ENCODE measurements at regions of chr7 and their contacts with region 1.

Region 1: DNA sequence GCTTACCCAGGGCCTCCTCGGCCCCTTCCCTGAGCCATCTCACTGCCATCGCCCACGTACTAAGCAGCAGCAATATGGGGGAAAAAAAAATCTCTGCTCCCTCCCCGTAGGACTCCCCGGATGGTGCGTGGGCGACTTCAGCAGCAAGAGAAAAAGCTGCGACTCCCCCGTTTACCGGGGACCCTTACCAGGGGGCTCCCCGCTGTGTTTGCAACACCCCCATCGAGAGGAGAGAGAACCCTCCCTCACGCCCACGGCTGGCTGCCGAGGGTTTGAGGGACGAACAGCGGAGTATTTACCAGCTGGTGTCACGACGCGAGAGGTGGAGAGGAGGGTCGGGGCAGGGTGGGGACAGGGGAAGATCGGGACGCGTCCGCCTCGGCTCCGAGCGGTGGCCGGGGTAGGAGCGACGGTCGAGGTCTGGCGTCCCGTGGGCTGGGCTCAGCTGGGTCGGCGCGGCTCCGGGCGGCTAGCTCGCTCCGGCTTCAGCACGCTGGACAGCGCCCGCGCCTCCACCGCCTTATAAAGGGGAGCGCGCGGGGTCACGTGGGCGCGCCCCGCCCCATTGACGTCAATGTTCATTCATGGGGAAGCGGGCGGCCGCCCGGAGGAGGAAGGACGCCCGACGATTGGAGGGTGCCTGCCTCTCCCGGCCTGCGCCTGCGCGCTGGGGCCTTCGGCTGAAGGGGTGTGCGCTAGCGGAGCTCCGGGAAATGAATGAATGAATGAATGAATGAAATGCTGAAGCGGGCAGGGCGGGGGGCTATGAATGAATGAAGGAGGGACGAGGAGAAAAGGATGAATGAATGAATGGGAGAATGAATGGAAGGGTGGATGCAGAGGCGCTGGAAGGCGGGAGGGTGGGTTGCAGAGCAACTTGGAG is at the start of gene VGF:
- DNase-seq: peak; percentile 96
- ATAC-seq: peak; percentile 75
- H3K4me3 Mint-ChIP-seq: peak within 1 kb of the TSS; percentile 69
- H3K27ac Mint-ChIP-seq: no peak within 1 kb of the TSS
- H3K4me1 Mint-ChIP-seq: peaks cover 53% of the 10 kb centered on the region
- H3K27me3 Mint-ChIP-seq: peaks cover 54% of the 10 kb centered on the region
- CTCF ChIP-seq: no peak
- total RNA-seq, gene VGF: not detected

Region 2: GRCh38 chr7:101153969-101154692 is 11.2 kb before region 1 on chr7 and contains the start of gene AP1S1:
- CTCF ChIA-PET with region 1: interaction called, 18 read pairs
- POLR2A ChIA-PET with region 1: interaction called, 4 read pairs
- intact Hi-C with region 1: no loop called
- DNase-seq: peak; percentile 96
- ATAC-seq: peak; percentile 94
- H3K4me3 Mint-ChIP-seq: peak within 1 kb of the TSS; percentile 80
- H3K27ac Mint-ChIP-seq: peak within 1 kb of the TSS; percentile 64
- H3K4me1 Mint-ChIP-seq: peaks cover 10% of the 10 kb centered on the region
- H3K27me3 Mint-ChIP-seq: peaks cover 10% of the 10 kb centered on the region
- CTCF ChIP-seq: no peak
- total RNA-seq, gene AP1S1: 35.6 to 39.5 TPM

Region 3: GRCh38 chr7:101453617-101454016 is 288.3 kb after region 1 on chr7:
- CTCF ChIA-PET with region 1: no interaction called
- POLR2A ChIA-PET with region 1: no interaction called
- intact Hi-C with region 1: no loop called
- DNase-seq: no peak
- ATAC-seq: no peak
- H3K4me3 Mint-ChIP-seq: no peak overlapping the region
- H3K27ac Mint-ChIP-seq: no peak overlapping the region
- H3K4me1 Mint-ChIP-seq: no peaks in the 10 kb centered on the region
- H3K27me3 Mint-ChIP-seq: no peaks in the 10 kb centered on the region
- CTCF ChIP-seq: no peak

Measured in activated CD8-positive, alpha-beta T cell treated with anti-CD3 and anti-CD28 coated beads for 36 hours (primary cell).